Activated CD4-positive, alpha-beta T cell treated with anti-CD3 and anti-CD28 coated beads, Interleukin-2, amount 10 ng/mL, durations not matched to agents 24 days and 14 days (primary cell): ENCODE measurements at regions of chr10 and their contacts with region 1.

Region 1: GRCh38 chr10:88932539-88933256 is 19.9 kb downstream of the ACTA2 start:
- DNase-seq: peak; percentile 83
- H3K4me3 Mint-ChIP-seq: no peak overlapping the region
- H3K27ac Mint-ChIP-seq: no peak overlapping the region
- H3K4me1 Mint-ChIP-seq: peaks cover 25% of the 10 kb centered on the region
- H3K27me3 Mint-ChIP-seq: no peaks in the 10 kb centered on the region

Region 2: GRCh38 chr10:88565072-88565471 is 367.6 kb before region 1 on chr10:
- intact Hi-C with region 1: loop called (anchors 1 kb)
- DNase-seq: no peak
- H3K4me3 Mint-ChIP-seq: no peak overlapping the region
- H3K27ac Mint-ChIP-seq: no peak overlapping the region
- H3K4me1 Mint-ChIP-seq: peaks cover 2% of the 10 kb centered on the region
- H3K27me3 Mint-ChIP-seq: peaks cover 23% of the 10 kb centered on the region

Region 3: GRCh38 chr10:88728107-88728763 is 204.5 kb before region 1 on chr10:
- intact Hi-C with region 1: loop called (anchors 2 kb)
- DNase-seq: peak; percentile 79
- H3K4me3 Mint-ChIP-seq: no peak overlapping the region
- H3K27ac Mint-ChIP-seq: no peak overlapping the region
- H3K4me1 Mint-ChIP-seq: peaks cover 5% of the 10 kb centered on the region
- H3K27me3 Mint-ChIP-seq: peaks cover 12% of the 10 kb centered on the region

Region 4: DNA sequence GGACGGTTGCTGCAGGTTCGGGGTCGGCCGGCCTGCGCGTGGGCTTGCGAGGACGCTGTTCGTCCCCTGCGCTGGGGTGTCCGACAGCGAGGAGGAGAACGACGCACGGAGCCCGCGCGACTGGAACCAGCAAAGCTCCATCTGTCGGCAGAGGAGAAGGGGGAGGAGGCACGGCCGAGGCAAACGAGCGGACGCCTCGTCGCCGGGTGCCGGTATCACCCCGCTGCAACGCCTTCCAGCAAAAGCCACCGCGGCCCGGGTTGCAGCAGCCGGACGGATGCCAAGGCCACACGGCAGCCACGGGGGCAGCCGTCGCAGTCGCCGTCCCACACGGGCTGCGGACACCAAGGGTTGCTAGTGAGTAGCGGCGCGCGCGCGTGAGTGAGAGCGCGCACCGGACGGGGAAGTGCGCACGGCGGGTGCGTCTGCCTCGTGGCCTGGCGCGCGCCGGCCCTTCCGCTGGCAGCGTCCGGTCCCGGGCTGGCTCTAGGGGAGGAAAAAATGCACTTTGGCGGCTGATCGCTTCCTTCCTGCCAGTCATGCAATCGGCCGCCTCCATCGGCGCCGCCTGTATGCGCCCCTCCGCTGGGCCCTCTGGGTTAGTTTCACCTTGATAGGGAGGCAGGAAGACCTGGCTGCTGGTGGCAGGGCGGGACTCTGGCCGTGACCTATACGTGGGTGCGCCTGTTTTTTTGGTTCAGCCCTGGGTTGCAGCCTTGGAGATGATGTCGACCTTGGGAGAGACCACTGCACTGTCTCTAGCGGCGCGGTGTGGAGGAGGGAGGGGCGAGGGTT is 52.2 kb before region 1 on chr10:
- intact Hi-C with region 1: loop called (anchors 5 kb)
- DNase-seq: peak; percentile 92
- H3K4me3 Mint-ChIP-seq: peak overlapping the region; percentile 96
- H3K27ac Mint-ChIP-seq: peak overlapping the region; percentile 99
- H3K4me1 Mint-ChIP-seq: peaks cover 59% of the 10 kb centered on the region
- H3K27me3 Mint-ChIP-seq: no peaks in the 10 kb centered on the region

Region 5: GRCh38 chr10:89029785-89030437 is 97.2 kb after region 1 on chr10:
- intact Hi-C with region 1: loop called (anchors 1 kb)
- DNase-seq: peak; percentile 90
- H3K4me3 Mint-ChIP-seq: no peak overlapping the region
- H3K27ac Mint-ChIP-seq: no peak overlapping the region
- H3K4me1 Mint-ChIP-seq: peaks cover 33% of the 10 kb centered on the region
- H3K27me3 Mint-ChIP-seq: no peaks in the 10 kb centered on the region

Region 6: DNA sequence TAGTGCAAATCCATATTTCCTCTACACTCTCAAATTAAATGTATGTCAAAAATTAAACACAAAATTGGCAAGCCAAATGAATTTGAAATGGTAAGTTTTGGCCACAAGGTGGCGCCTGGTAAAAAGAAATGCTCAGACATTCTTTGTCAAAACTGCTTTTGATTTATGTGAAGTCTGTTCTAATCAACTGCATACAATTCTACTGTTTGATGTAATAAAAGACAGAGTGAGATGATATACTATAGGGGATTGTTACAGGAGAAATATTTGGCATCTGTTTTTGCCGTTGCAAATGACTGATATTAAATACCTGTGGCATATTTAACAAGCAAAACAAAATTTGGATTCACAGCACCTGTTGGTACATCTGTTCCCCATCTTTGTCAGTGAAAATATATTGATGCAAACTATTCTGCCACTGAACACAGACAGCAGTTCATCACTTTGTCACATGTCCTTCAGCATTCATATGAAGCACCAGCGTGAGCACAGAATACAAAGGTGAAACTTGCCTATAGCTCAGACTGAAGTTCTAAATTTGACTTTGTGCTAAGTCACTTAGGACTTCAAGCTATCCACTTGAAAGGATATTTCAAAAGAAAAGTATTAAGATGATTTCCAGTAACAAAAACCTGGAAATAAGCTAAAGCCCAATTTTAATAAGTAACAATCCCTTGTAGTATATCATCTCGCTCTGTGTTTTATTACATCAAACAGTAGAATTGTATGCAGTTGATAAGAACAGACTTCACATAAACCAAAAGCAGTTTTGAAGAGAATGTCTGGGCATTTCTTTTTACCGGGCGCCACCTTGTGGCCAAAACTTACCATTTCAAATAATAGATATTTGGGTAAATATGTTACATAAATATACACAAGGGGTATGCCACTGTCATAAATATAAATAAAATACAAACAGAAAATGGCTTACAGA is 284.6 kb after region 1 on chr10:
- intact Hi-C with region 1: loop called (anchors 1 kb)
- DNase-seq: peak; percentile 89
- H3K4me3 Mint-ChIP-seq: no peak overlapping the region
- H3K27ac Mint-ChIP-seq: no peak overlapping the region
- H3K4me1 Mint-ChIP-seq: peaks cover 9% of the 10 kb centered on the region
- H3K27me3 Mint-ChIP-seq: peaks cover 2% of the 10 kb centered on the region